ENCODE measurements at regions of chr10 and their contacts with region 1.

Region 1: GRCh38 chr10:132458593-132459300 is 61.7 kb downstream of the PWWP2B start:
- H3K4me3 ChIP-seq: no peak overlapping the region
- H3K27ac ChIP-seq: no peak overlapping the region
- H3K4me1 ChIP-seq: no peaks in the 10 kb centered on the region
- CTCF ChIP-seq: peak; percentile 96

Region 2: DNA sequence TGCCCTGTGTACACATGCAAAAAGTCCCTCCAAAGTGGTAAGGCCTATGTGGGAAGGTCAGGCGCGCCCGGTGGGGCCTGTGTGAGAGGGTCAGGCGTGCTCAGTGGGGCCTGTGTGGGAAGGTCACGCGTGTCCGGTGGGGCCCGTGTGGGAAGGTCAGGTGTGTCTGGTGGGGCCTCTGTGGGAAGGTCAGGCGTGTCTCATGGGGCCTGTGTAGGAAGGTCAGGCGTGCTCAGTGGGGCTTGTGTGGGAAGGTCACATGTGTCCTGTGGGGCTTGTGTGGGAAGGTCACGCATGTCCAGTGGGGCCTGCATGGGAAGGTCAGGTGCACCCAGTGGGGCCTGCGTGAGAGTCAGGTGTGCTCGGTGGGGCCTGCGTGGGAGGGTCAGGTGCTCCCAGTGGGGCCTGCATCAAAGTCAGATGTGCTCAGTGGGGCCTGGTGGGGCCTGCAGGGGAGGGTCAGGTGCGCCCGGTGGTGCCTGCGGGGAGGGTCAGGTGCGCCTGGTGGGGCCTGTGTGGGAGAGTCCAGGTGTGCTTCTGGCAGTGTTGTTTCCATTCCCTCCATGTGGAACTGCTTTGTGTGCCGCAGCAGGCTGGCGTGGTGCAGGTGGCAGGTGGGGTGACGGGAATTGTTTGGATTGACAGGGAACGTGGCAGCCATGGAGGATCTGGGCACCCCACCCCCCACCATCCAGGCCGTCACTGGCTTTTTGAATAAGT is 111.4 kb before region 1 on chr10:
- CTCF ChIA-PET with region 1: no interaction called
- POLR2A ChIA-PET with region 1: no interaction called
- H3K4me3 ChIP-seq: no peak overlapping the region
- H3K27ac ChIP-seq: no peak overlapping the region
- H3K4me1 ChIP-seq: no peaks in the 10 kb centered on the region
- CTCF ChIP-seq: no peak

Region 3: GRCh38 chr10:132434405-132435005 is 24.2 kb before region 1 on chr10:
- CTCF ChIA-PET with region 1: interaction called, 3 read pairs
- POLR2A ChIA-PET with region 1: interaction called, 10 read pairs
- H3K4me3 ChIP-seq: no peak overlapping the region
- H3K27ac ChIP-seq: no peak overlapping the region
- H3K4me1 ChIP-seq: no peaks in the 10 kb centered on the region
- CTCF ChIP-seq: no peak

Region 4: DNA sequence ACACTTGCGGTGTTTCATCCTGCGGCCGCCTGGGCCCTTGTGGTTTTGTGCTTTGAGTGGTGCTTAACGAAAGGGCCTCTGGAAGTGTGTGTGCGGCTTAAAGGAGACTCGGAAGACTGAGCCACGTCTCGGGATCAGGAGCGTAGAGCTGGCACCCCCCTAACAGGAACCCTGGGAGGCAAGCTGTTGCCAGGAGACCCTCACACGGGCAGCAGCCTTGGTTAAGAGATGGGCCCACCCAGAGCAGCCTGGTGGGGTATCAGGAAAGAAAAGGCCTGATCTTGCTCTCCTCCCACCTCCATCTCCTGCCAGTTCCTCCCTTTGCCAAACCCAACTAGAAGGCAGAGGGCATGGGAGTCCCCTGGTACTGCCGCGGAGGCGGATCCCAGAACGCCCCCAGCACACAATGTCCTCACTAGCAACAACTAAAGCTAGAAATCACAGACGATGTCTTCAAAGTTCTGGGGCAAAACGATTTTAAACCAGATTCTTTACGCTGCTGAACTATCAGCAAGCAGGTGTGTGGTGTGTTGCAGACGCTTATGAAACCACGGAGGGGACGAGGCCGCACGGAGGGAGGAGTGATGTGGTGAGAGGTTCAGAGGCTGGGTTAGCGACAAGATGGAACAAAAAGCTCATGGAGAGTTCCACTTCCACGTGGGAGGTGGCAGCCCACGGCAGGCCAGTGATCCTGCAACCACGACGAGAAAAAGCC is 11.8 kb after region 1 on chr10:
- CTCF ChIA-PET with region 1: interaction called, 14 read pairs
- POLR2A ChIA-PET with region 1: no interaction called
- H3K4me3 ChIP-seq: no peak overlapping the region
- H3K27ac ChIP-seq: no peak overlapping the region
- H3K4me1 ChIP-seq: no peaks in the 10 kb centered on the region
- CTCF ChIP-seq: no peak

Region 5: GRCh38 chr10:132637477-132638129 is 178.9 kb after region 1 on chr10:
- CTCF ChIA-PET with region 1: interaction called, 16 read pairs
- POLR2A ChIA-PET with region 1: no interaction called
- H3K4me3 ChIP-seq: no peak overlapping the region
- H3K27ac ChIP-seq: no peak overlapping the region
- H3K4me1 ChIP-seq: no peaks in the 10 kb centered on the region
- CTCF ChIP-seq: peak; percentile 77